ENCODE measurements at regions of chr1 and their contacts with region 1.

Region 1: DNA sequence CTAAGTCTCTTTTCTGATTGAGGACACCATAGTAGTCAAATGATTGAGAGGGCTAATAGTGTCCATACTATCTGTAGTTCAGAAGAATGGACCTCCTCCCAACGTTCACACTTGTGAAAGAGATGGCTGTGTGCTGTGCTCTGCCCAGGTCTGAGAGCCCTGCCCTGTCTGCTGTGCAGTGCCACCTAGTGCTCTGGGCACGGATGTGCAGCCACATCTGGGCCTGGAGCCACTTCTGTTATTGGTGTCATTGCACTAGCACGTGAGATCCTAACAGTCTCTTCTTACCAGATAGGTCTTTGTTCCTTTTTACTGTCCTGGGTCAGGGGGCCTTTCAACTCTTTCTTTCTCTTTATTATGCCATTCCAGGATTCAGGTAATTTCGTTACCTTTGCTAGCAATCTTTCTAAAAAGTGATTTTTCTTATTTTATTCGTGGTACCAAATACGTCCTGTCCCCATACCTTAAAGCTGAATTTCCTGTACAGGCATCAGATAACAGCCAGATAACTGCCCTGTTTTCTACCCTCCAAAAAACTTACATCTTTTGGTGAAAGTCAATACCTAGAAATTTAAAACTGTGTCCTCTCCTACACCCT is 21.7 kb downstream of the INTS3 start:
- DNase-seq: peak; percentile 90
- H3K4me3 Mint-ChIP-seq: no peak overlapping the region
- H3K27ac Mint-ChIP-seq: no peak overlapping the region
- H3K4me1 Mint-ChIP-seq: peaks cover 2% of the 10 kb centered on the region
- H3K27me3 Mint-ChIP-seq: no peaks in the 10 kb centered on the region

Region 2: GRCh38 chr1:153775458-153776327 is 26.2 kb after region 1 on chr1:
- CTCF ChIA-PET with region 1: interaction called, 3 read pairs
- intact Hi-C with region 1: loop called (anchors 1 kb)
- DNase-seq: peak; percentile 60
- H3K4me3 Mint-ChIP-seq: peak overlapping the region; percentile 69
- H3K27ac Mint-ChIP-seq: no peak overlapping the region
- H3K4me1 Mint-ChIP-seq: peaks cover 9% of the 10 kb centered on the region
- H3K27me3 Mint-ChIP-seq: no peaks in the 10 kb centered on the region

Region 3: GRCh38 chr1:153922972-153923925 is 173.7 kb after region 1 on chr1 and contains the start of gene GATAD2B:
- CTCF ChIA-PET with region 1: no interaction called
- intact Hi-C with region 1: no loop called
- DNase-seq: peak; percentile 100
- H3K4me3 Mint-ChIP-seq: peak within 1 kb of the TSS; percentile 81
- H3K27ac Mint-ChIP-seq: peak within 1 kb of the TSS; percentile 94
- H3K4me1 Mint-ChIP-seq: peaks cover 36% of the 10 kb centered on the region
- H3K27me3 Mint-ChIP-seq: no peaks in the 10 kb centered on the region
- total RNA-seq, gene GATAD2B: 69.0 to 70.2 TPM

Measured in activated naive CD4-positive, alpha-beta T cell treated with anti-CD3 and anti-CD28 coated beads for 36 hours (primary cell).